Cardiac septum (tissue), 1 donor: ENCODE measurements at regions of chr2 and their contacts with region 1.

Region 1: GRCh38 chr2:121539750-121540469 is 9.2 kb downstream of the RNU4ATAC start:
- DNase-seq: no peak

Region 2: GRCh38 chr2:121319953-121320352 is 220.0 kb before region 1 on chr2:
- intact Hi-C with region 1: no loop called
- DNase-seq: peak; percentile 10

Region 3: GRCh38 chr2:121605820-121606733 is 66.2 kb after region 1 on chr2:
- intact Hi-C with region 1: loop called (anchors 5 kb)
- DNase-seq: no peak